Prostate gland (tissue), 2 donors: ENCODE measurements at regions of chrX and their contacts with region 1.

Region 1: GRCh38 chrX:129637217-129638109 is 17.3 kb downstream of the APLN start:
- DNase-seq: peak; percentile 46
- H3K4me3 ChIP-seq: no peak overlapping the region
- H3K27ac ChIP-seq: no peak overlapping the region
- H3K4me1 ChIP-seq: no peaks in the 10 kb centered on the region
- H3K27me3 ChIP-seq: no peaks in the 10 kb centered on the region
- CTCF ChIP-seq: peak; percentile 69 to 83 (median 78)
- POLR2A ChIP-seq: no peak

Region 2: GRCh38 chrX:129565046-129565650 is 72.3 kb before region 1 on chrX:
- intact Hi-C with region 1: no loop called
- DNase-seq: no peak
- H3K4me3 ChIP-seq: no peak overlapping the region
- H3K27ac ChIP-seq: no peak overlapping the region
- H3K4me1 ChIP-seq: no peaks in the 10 kb centered on the region
- H3K27me3 ChIP-seq: no peaks in the 10 kb centered on the region
- CTCF ChIP-seq: no peak
- POLR2A ChIP-seq: no peak

Region 3: GRCh38 chrX:129726307-129727111 is 89.0 kb after region 1 on chrX:
- intact Hi-C with region 1: loop called (anchors 5 kb)
- DNase-seq: peak; percentile 35
- H3K4me3 ChIP-seq: no peak overlapping the region
- H3K27ac ChIP-seq: no peak overlapping the region
- H3K4me1 ChIP-seq: no peaks in the 10 kb centered on the region
- H3K27me3 ChIP-seq: no peaks in the 10 kb centered on the region
- CTCF ChIP-seq: peak in 3 of 4 experiments; percentile 40 to 73 (median 73)
- POLR2A ChIP-seq: no peak

Region 4: GRCh38 chrX:129823115-129823514 is 185.7 kb after region 1 on chrX:
- intact Hi-C with region 1: loop called (anchors 10 kb)
- DNase-seq: no peak
- H3K4me3 ChIP-seq: no peak overlapping the region
- H3K27ac ChIP-seq: no peak overlapping the region
- H3K4me1 ChIP-seq: no peaks in the 10 kb centered on the region
- H3K27me3 ChIP-seq: no peaks in the 10 kb centered on the region
- CTCF ChIP-seq: peak in 3 of 4 experiments; percentile 31 to 35 (median 31)
- POLR2A ChIP-seq: no peak